HEK293 (cell line): ENCODE measurements at regions of chr18 and their contacts with region 1.

Region 1: DNA sequence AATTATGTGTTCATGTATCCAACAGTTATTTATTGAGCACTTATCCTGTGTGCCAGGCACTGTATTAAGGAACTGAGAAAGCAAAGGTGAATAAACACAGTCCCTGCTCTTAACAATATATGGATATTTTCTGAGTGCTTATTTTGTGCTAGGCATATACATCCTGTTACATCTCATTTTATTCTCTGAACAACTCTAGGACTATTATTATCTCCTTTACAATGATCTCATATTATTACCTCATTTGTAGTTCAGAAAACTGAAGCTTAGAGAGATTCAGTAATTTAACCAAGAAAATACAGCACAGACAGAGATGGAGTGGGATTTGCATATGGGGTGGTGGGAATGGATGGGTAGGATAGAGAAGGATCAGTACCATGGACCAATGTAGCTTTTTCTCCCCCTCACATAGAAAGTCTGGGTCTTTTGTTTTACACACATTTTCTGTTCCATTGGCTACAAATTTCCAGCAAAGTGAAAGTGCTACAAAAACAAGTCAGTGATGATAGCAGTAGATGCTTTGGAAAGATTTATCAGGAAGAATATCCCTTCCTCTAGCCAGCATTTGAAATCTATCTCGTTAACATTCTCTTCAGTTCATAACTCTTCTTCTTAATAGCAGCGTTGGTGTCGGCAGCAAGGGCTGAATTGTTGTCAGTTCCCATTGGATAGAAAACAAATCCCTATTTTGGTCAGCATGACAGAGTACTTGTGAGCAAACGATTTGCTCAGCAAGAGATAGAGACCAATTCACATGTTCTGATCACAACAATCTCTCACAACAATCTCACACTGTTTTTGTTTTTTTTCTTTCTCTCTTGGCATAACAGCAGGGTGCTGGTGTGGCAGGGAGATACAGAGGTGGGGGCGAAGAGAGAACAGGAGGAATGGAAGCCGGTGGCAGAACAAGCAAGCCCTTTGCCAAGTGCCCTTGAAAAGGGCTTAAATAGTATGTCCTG is 102.2 kb upstream of the KCTD1 start:
- H3K4me3 ChIP-seq: no peak overlapping the region
- H3K27ac ChIP-seq: no peak overlapping the region
- H3K4me1 ChIP-seq: peaks cover 11% of the 10 kb centered on the region
- CTCF ChIP-seq: no peak

Region 2: GRCh38 chr18:26405190-26405801 is 245.3 kb before region 1 on chr18:
- CTCF ChIA-PET with region 1: interaction called, 14 read pairs
- POLR2A ChIA-PET with region 1: no interaction called
- H3K4me3 ChIP-seq: no peak overlapping the region
- H3K27ac ChIP-seq: no peak overlapping the region
- H3K4me1 ChIP-seq: no peaks in the 10 kb centered on the region
- CTCF ChIP-seq: peak; percentile 84

Region 3: DNA sequence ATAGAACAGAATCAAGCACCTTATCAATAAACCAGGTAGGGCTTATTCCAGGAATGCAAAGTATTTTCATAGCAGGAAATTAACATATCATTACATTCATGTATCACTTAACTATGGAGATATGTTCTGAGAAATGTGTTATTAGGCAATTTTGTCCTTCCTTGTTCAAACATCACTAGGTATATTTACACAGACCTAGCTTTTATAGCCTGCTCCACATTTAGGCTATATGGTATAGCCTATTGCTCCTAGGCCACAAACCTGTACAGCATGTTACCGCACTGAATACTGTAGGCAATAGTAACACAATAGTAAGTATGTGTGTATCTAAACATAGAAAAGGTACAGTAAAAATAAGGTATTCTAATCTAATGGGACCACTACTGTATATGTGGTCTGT is 19.5 kb before region 1 on chr18:
- CTCF ChIA-PET with region 1: no interaction called
- POLR2A ChIA-PET with region 1: no interaction called
- H3K4me3 ChIP-seq: no peak overlapping the region
- H3K27ac ChIP-seq: no peak overlapping the region
- H3K4me1 ChIP-seq: no peaks in the 10 kb centered on the region
- CTCF ChIP-seq: no peak

Region 4: GRCh38 chr18:26667046-26667445 is 16.5 kb after region 1 on chr18:
- CTCF ChIA-PET with region 1: no interaction called
- POLR2A ChIA-PET with region 1: no interaction called
- H3K4me3 ChIP-seq: no peak overlapping the region
- H3K27ac ChIP-seq: no peak overlapping the region
- H3K4me1 ChIP-seq: no peaks in the 10 kb centered on the region
- CTCF ChIP-seq: no peak

Region 5: DNA sequence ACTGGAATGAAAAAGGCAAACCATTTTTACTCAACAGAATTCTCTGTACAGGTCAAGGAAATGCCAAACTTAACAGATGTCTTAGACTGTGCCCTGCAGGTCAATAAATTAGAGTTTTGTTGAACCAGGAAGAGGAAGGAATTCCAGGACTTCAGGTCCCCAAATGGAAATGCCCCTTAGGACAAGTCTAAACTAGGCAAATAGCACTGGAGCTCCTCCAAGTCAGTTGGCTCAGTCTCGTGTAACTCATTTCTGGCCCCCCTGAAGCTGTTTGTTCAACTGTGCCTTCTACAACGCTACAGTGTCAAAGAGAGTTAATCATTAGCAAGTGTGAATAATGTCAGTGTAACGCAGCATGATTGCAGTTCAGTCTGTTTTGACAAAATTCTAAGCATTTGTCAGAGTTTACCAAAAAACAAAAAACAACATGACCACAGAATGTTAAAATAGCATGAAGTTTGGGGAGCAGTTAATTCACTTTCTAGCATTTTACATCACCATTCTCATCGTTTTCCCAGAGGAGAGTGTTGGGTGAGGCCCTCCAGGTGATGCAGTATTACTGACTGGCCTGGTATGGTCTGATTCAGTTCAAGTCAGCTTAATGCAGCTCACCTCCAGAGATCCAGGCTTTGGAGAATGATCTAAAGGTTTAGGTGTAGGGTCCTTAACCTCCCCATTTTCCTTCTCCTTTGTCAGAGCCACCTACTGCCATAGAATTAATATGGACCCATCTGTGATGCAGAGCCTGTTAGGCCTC is 106.9 kb after region 1 on chr18:
- CTCF ChIA-PET with region 1: no interaction called
- POLR2A ChIA-PET with region 1: no interaction called
- H3K4me3 ChIP-seq: no peak overlapping the region
- H3K27ac ChIP-seq: no peak overlapping the region
- H3K4me1 ChIP-seq: no peaks in the 10 kb centered on the region
- CTCF ChIP-seq: no peak